Testis (tissue), 5 donors: ENCODE measurements at regions of chr2 and their contacts with region 1.

Region 1: DNA sequence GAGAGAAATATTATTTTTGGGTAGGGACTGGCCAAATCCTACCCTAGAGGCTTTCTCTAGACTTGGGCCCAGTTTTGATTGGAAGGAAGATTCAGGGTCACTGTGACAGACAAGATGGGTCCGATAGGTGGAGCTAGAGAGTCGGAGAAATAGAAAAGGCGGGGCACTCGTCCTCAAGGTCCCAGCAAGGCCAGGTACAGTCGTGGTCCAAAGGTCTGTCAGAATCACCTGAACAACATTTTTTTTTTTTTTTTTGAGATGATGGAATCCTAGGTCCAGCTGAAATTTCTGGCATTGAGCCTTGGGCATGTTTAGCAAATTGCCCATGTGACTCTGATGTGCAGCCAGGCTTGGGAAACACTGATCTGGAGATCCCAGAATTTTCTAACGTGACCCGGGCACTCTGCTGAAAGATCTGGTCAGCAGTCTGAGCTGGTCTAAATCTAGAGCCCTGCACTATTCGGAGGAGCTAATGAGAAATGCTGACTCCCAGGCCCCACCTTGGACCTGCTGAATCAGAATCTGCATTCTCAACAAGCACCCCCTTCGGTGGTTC is 23.0 kb upstream of the NTSR2 start:
- DNase-seq: peak; percentile 75
- H3K4me3 ChIP-seq: no peak overlapping the region
- H3K27ac ChIP-seq: no peak overlapping the region
- H3K4me1 ChIP-seq: peaks cover 25% of the 10 kb centered on the region
- H3K27me3 ChIP-seq: no peaks in the 10 kb centered on the region
- CTCF ChIP-seq: peak; percentile 63 to 72 (median 70)
- POLR2A ChIP-seq: no peak

Region 2: GRCh38 chr2:11652553-11652952 is 40.5 kb before region 1 on chr2:
- intact Hi-C with region 1: no loop called
- DNase-seq: no peak
- H3K4me3 ChIP-seq: no peak overlapping the region
- H3K27ac ChIP-seq: no peak overlapping the region
- H3K4me1 ChIP-seq: peaks cover 4% of the 10 kb centered on the region
- H3K27me3 ChIP-seq: no peaks in the 10 kb centered on the region
- CTCF ChIP-seq: no peak
- POLR2A ChIP-seq: no peak

Region 3: DNA sequence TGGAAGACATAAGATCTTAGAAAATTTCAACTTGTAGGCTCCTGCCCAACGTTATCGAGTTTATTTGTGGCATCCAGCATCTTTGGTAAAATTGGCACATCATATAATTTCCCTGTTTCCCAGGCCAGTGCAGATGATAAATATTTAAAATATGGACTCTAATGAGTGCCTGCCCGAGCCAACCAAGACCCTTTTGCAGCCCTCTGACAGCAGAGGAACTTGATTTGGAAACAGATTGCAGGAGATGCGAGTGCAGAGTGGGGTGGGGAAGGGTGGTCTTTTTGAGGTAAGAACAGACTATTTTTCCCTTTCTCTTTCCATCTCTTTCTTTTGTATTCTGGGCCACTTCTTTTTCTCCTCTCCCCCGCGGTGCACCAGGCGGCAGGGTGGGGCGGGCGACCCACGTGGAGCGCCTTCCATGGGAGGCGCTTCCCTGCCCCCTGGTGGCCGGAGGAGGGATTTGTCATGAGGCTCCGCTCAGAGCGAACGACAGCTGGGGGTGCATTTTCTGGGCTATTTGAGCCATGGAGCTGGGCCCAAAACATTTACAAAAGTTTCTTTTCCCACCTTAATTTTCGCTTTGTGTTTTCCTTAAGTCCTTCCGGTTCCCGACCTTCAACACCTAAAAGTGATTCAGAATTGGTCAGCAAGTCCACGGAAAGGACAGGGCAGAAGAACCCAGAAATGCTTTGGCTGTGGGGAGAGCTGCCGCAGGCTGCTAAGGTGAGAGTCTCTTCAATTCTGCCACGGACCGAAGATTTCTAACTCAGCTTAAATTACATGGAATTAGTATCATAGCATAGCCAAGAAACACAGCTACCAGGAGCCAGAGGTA is 86.1 kb after region 1 on chr2:
- intact Hi-C with region 1: loop called (anchors 5 kb)
- DNase-seq: peak; percentile 90
- H3K4me3 ChIP-seq: peak overlapping the region in 1 of 2 donors; percentile 16
- H3K27ac ChIP-seq: peak overlapping the region in 1 of 2 donors; percentile 46
- H3K4me1 ChIP-seq: peaks cover 7% of the 10 kb centered on the region
- H3K27me3 ChIP-seq: no peaks in the 10 kb centered on the region
- CTCF ChIP-seq: peak; percentile 98
- POLR2A ChIP-seq: peak; percentile 8